Posterior vena cava (tissue), 2 donors: ENCODE measurements at regions of chr17 and their contacts with region 1.

Region 1: DNA sequence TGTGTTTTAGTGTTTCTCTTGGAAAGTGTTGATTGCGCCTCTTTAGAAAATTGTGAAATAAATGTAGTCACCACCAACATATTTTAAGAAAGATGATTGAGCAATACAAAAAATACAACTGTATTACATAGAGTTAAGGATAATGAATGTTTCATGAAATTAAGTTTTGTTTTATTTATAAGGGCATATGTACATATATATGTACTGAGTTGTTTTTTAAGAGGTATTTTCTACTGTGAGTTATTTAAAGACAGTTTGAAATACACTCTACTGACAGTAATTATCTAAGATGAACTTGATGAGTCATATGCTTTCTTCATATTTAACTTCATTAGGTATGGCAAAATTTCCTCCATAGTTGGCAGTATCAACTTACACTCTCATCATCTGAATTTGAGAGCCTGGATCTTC is 411.7 kb downstream of the HS3ST3B1 start:
- DNase-seq: no peak

Region 2: DNA sequence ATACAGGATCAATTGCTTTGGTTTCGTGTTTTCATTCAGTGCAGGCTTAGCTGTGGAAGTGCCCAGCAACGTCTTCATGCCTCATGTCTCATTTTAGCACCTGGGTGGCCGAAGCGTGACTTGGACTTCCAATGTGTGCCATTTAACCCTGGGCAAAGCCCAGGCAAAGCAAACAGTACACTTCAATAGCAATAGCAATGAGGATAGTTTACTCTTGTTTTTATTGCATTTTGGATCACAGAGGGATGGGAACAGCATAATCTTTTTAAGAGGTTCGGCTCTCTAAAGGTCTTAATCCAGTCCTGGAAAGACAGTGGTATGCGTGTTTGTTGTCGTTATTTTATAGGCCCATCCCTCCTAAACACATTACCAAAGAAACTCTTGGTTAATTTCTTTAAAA is 325.6 kb before region 1 on chr17:
- intact Hi-C with region 1: no loop called
- DNase-seq: no peak

Region 3: DNA sequence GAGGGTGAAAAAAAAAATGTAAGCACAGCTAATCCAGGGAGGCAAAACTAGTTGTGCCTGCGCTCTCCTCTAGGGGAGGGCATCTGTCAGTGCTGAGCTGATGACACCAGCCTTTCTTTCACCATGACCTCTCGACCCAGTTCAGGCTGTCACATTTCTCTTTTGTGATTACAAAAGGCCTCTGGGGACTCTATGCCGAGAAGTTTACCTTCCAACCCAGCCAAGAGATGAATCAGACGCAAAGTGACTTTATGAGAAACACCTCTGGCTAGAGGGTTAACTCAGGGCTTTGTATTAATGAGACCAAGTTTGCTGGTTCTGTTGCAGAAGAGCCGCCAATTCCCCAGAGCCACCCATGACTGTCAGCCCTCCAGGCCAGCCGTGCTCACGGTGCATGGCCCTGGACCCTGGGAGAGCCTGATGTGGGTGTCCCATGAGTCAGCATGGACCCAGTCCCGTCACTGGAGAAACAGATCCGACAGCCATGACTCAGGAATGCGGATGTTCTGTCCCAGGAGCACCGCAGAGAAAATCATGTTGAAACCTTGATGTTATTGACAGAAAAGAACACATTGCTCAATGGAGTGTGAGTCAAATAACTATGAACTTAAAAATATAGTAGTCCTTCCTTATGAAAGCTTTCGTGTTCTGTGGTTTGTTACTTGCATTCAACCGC is 25.5 kb after region 1 on chr17:
- intact Hi-C with region 1: loop called in 1 of 2 experiments (anchors 2 kb)
- DNase-seq: peak; percentile 88

Region 4: DNA sequence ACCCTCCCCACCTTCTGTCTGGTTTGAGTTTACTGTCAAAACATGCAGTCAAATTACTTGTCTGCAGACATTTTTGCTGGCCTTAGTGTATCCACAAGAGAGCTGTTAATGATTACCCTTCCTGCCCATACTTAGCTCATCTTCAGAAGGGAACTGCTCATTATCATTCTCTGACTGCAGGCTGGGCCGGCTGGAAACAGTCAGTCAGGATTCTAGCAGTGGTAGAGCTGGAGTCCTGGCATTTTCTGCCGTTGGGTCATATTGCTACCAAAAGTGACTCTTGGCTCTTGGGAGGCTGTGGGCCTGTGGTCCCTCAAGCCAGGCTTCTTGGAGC is 48.4 kb after region 1 on chr17:
- intact Hi-C with region 1: no loop called
- DNase-seq: no peak